Endothelial cell of umbilical vein (primary cell): ENCODE measurements at regions of chr4 and their contacts with region 1.

Region 1: DNA sequence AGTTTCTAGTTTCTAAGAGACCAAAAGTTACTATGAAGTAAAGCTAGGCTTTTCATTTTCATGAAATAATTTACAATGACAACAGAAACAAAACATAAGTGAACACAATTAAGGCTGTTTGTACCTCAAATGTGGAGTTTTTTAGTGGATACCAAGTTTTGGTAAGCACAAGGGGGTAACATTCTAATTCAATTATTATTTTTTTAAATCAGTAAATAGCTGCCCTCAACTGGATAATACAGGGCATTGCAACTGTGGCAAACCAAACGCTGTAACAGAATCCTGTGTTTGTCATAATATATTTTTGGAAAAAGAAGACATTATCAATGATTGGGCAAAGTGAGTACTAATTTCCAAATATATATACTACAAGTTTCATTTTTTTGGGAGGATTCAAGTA is 150.3 kb downstream of the FBXW7 start:
- DNase-seq: peak; percentile 23
- H3K4me3 ChIP-seq: no peak overlapping the region
- H3K27ac ChIP-seq: no peak overlapping the region
- H3K4me1 ChIP-seq: no peaks in the 10 kb centered on the region
- H3K27me3 ChIP-seq: no peaks in the 10 kb centered on the region
- CTCF ChIP-seq: peak; percentile 30 to 31
- POLR2A ChIP-seq: no peak

Region 2: DNA sequence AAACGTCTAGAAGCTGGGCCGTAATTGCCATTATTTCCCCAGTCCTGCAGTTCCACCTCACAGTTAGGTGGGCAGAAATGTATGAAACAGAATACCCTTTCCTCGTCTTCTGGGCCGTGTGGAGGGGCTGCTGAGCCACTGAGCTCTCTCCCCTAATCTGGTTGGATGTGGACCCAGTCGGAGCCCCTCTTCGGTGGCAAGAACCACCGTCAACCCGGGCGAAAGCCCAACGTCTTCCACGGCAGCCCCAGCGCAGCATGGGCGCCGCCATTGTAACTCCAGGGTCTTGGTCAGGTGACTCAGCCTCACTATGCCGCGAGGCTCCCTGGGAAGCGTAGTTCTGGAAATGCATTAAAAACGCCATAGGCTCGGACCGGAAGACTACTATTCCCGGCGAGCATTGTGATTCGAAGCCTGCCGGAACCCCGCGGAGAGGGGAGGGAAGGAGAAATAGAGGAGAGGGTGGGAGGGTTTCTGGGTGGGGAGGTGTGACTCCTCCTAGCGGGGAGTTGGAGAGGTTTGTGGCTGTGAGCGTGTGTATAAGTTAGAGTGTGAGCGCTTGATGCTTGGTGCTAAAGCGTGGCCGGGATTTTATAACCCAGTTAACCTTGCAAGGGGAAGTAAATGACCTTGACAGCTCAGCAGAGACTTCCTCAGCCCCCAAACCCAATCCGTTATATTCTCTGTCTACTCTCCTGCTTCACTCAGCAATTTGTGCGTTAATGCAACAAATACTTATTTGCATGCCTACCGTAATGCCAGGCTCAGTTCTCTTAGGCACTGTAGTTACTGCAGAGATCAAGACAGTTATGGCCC is 624.6 kb before region 1 on chr4 and contains the start of gene GATB:
- CTCF ChIA-PET with region 1: interaction called, 4 read pairs
- POLR2A ChIA-PET with region 1: no interaction called
- dilution Hi-C with region 1: no loop called
- intact Hi-C with region 1: loop called (anchors 5 kb)
- DNase-seq: peak; percentile 98
- H3K4me3 ChIP-seq: peak within 1 kb of the TSS; percentile 59 to 95 (median 78)
- H3K27ac ChIP-seq: peak within 1 kb of the TSS; percentile 63
- H3K4me1 ChIP-seq: peaks cover 10% of the 10 kb centered on the region
- H3K27me3 ChIP-seq: peaks cover 0 to 3% of the 10 kb centered on the region in 2 experiments
- CTCF ChIP-seq: peak in 1 of 2 donors; percentile 72
- POLR2A ChIP-seq: peak; percentile 79
- total RNA-seq, gene GATB: 17.7 and 20.7 TPM in 2 replicates

Region 3: GRCh38 chr4:151801547-151802516 is 583.7 kb before region 1 on chr4:
- CTCF ChIA-PET with region 1: interaction called, 4 read pairs
- POLR2A ChIA-PET with region 1: no interaction called
- dilution Hi-C with region 1: no loop called
- intact Hi-C with region 1: loop called (anchors 5 kb)
- DNase-seq: peak; percentile 51
- H3K4me3 ChIP-seq: no peak overlapping the region
- H3K27ac ChIP-seq: no peak overlapping the region
- H3K4me1 ChIP-seq: no peaks in the 10 kb centered on the region
- H3K27me3 ChIP-seq: peaks cover 2 to 3% of the 10 kb centered on the region in 2 experiments
- CTCF ChIP-seq: peak; percentile 91 to 92
- POLR2A ChIP-seq: no peak

Region 4: DNA sequence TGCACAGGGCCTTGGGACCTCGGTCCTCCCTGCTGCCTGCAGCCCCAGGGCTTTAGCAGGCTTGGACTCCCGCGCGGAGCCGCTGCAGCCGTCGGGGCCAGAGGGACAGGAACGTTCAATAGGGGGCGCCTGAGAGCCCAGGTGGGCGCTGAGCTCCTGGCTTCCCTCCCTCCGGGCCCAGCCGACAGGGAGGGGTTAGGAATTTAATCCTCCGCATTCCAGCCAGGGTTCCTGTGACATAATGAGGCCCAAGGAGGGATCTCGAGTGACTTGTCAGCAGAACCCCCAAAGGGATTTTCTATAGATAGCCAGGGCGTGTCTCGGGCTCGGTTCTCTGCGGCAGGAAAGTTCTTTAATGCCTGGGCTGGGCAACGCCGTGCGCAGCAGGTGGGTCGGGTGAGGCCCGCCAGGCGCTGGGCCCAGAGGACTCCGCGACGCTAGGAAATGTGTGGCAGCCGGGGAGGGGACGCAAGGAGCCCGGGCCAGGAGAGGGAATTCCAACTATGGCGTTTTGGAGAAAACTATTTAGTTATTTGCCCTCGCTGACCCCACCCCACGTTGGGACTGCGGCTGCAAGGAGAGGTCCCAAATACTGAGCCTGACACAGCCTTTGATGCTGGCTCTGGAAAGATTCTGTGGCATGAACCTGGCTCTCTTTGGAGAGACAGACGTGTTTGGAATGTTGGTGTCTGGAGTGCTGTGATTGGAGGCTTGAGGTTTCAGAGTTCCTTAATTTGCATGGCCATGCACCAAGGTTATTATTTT is 339.6 kb before region 1 on chr4:
- CTCF ChIA-PET with region 1: interaction called, 19 read pairs
- POLR2A ChIA-PET with region 1: no interaction called
- dilution Hi-C with region 1: no loop called
- intact Hi-C with region 1: loop called (anchors 1 kb)
- DNase-seq: peak; percentile 21
- H3K4me3 ChIP-seq: no peak overlapping the region
- H3K27ac ChIP-seq: no peak overlapping the region
- H3K4me1 ChIP-seq: no peaks in the 10 kb centered on the region
- H3K27me3 ChIP-seq: peaks cover 9 to 24% of the 10 kb centered on the region in 2 experiments
- CTCF ChIP-seq: peak; percentile 61 to 82
- POLR2A ChIP-seq: no peak

Region 5: GRCh38 chr4:152106113-152106763 is 279.3 kb before region 1 on chr4:
- CTCF ChIA-PET with region 1: no interaction called
- POLR2A ChIA-PET with region 1: no interaction called
- dilution Hi-C with region 1: no loop called
- intact Hi-C with region 1: loop called (anchors 5 kb)
- DNase-seq: peak; percentile 96
- H3K4me3 ChIP-seq: no peak overlapping the region
- H3K27ac ChIP-seq: peak overlapping the region; percentile 82
- H3K4me1 ChIP-seq: peaks cover 16% of the 10 kb centered on the region
- H3K27me3 ChIP-seq: no peaks in the 10 kb centered on the region
- CTCF ChIP-seq: no peak
- POLR2A ChIP-seq: no peak

Region 6: GRCh38 chr4:152369902-152370295 is 15.7 kb before region 1 on chr4:
- CTCF ChIA-PET with region 1: interaction called, 10 read pairs
- POLR2A ChIA-PET with region 1: no interaction called
- dilution Hi-C with region 1: no loop called
- intact Hi-C with region 1: no loop called
- DNase-seq: peak; percentile 34
- H3K4me3 ChIP-seq: no peak overlapping the region
- H3K27ac ChIP-seq: no peak overlapping the region
- H3K4me1 ChIP-seq: no peaks in the 10 kb centered on the region
- H3K27me3 ChIP-seq: no peaks in the 10 kb centered on the region
- CTCF ChIP-seq: peak in 1 of 2 donors; percentile 10
- POLR2A ChIP-seq: no peak